Activated CD4-positive, alpha-beta memory T cell treated with anti-CD3 and anti-CD28 coated beads for 36 hours (primary cell): ENCODE measurements at regions of chr6 and their contacts with region 1.

Region 1: DNA sequence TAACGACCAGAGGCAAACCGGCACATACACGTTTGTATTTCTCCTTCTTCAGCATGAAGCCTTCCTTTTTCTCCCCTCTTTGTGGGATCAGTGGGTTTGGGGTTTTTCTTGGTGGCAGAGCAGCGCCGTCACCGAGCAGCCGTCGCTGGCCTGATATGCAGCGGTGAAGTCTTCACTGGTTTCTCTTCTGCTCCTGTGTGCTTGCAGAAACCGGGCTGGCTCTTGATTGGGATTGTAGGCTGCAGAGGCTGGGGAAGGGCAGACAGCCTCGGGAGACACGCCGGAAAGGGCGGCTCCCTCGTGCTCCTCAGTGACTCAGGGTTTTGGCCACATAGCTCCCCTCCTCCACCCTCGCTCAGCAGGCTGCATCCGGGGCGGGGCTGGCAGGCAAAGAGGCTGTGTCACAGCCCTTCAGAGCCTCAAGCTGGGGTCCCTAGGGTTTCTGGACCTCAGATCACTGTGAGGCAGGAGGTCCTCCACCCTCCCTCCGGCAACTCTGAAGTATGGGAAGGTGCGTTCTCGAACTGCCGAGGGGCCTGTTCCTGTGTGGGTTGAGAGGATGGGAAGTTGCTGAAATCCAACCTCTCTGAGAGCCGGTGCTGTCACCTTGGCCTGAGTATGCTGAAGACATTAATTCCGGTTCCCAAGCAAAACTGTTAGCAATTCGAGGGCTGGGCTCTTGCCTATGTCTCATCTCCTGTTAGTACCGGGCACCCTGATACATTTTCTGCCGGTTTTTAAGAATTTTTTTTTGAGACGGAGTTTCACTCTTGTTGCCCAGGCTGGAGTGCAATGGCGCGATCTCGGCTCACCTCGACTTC is 24.2 kb downstream of the NQO2 start:
- DNase-seq: peak; percentile 95
- H3K4me3 Mint-ChIP-seq: peak overlapping the region; percentile 96
- H3K27ac Mint-ChIP-seq: peak overlapping the region; percentile 98
- H3K4me1 Mint-ChIP-seq: peaks cover 66% of the 10 kb centered on the region
- H3K27me3 Mint-ChIP-seq: no peaks in the 10 kb centered on the region

Region 2: DNA sequence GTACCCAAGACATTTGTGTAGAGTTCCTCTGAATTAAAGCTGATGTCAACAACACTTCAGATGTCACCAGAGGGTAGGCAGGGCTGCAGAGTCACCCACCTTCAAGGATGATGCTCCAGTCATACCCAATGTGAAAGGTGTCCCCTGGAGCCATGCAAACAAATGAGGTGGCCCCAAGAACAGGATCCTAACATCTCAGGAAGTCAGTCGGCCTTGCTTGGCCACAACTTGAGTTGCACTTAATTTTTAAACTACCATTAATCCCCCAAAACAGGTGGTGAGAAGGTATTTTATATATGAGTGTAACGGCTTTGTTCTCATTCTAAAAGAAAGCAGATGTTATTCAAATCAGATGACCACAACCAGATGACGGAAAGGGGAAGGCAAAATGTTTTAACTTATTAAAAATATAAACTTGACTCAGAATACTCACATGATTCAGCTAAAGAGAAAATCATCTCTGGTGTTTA is 161.1 kb before region 1 on chr6:
- CTCF ChIA-PET with region 1: no interaction called
- POLR2A ChIA-PET with region 1: no interaction called
- intact Hi-C with region 1: no loop called
- DNase-seq: peak; percentile 84
- H3K4me3 Mint-ChIP-seq: peak overlapping the region; percentile 39
- H3K27ac Mint-ChIP-seq: peak overlapping the region; percentile 96
- H3K4me1 Mint-ChIP-seq: peaks cover 77% of the 10 kb centered on the region
- H3K27me3 Mint-ChIP-seq: no peaks in the 10 kb centered on the region

Region 3: GRCh38 chr6:3052481-3053230 is 28.8 kb after region 1 on chr6:
- CTCF ChIA-PET with region 1: interaction called, 6 read pairs
- POLR2A ChIA-PET with region 1: interaction called, 3 read pairs
- intact Hi-C with region 1: loop called (anchors 1 kb)
- DNase-seq: no peak
- H3K4me3 Mint-ChIP-seq: peak overlapping the region; percentile 70
- H3K27ac Mint-ChIP-seq: no peak overlapping the region
- H3K4me1 Mint-ChIP-seq: peaks cover 10% of the 10 kb centered on the region
- H3K27me3 Mint-ChIP-seq: no peaks in the 10 kb centered on the region